ENCODE measurements at regions of chr3 and their contacts with region 1.

Region 1: DNA sequence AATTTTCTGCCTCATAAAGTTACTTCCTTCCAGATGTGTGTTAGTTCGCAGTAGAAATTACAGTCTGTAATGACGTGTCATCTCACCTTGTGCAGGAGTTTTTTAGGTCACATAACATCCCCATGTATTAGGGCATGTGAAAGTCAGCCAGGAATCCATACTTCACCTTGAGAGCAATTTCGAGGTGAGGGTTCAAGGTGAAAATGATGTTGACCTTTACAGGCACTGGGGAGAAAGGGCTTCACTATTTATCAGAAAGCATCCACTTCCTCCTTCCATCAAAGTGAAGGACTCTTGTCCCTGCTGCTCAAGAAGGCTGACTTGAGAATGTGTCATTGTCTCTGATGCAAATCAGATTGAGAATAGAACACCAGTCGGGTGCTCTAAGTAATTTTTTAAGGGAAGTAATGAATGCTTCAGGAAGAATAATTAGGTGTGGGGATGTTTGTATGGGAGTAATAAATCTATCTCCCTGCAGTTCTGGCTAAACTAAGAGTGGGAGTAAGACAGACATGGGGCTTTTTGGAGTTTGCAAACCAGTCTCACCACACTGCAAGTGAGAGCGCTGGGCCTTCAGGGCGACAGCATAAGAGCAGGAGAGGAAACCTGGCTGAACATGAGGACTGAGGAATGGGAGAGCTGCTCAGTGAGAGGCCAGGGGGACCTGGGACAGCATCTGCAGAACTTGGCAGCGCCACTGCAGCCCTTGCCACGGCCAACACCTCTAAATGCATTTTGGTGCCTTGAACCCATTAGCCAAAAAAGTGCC is 85.9 kb upstream of the IL12A start:
- DNase-seq: no peak
- ATAC-seq: peak; percentile 78
- H3K4me3 ChIP-seq: no peak overlapping the region
- H3K27ac ChIP-seq: peak overlapping the region; percentile 52
- H3K4me1 ChIP-seq: peaks cover 28% of the 10 kb centered on the region
- H3K27me3 ChIP-seq: no peaks in the 10 kb centered on the region
- CTCF ChIP-seq: no peak
- EP300 ChIP-seq: no peak
- POLR2A ChIP-seq: no peak
- RAD21 ChIP-seq: no peak

Region 2: GRCh38 chr3:159919873-159920272 is 17.1 kb after region 1 on chr3:
- CTCF ChIA-PET with region 1: interaction called, 5 read pairs
- POLR2A ChIA-PET with region 1: interaction called, 17 read pairs
- RAD21 ChIA-PET with region 1: interaction called, 4 read pairs
- SMC1A ChIA-PET with region 1: interaction called, 38 read pairs
- in situ Hi-C with region 1: no loop called
- intact Hi-C with region 1: no loop called
- DNase-seq: no peak
- ATAC-seq: peak; percentile 81
- H3K4me3 ChIP-seq: no peak overlapping the region
- H3K27ac ChIP-seq: peak overlapping the region; percentile 22; the same call in 1 of the 2 replicates
- H3K4me1 ChIP-seq: peaks cover 46% of the 10 kb centered on the region
- H3K27me3 ChIP-seq: no peaks in the 10 kb centered on the region
- CTCF ChIP-seq: no peak
- EP300 ChIP-seq: peak; percentile 75 to 80; a peak in 3 of 4 replicates
- POLR2A ChIP-seq: no peak
- RAD21 ChIP-seq: 0 out of 2 replicates have a peak, but pooled peaks have one; percentile 2

Region 3: DNA sequence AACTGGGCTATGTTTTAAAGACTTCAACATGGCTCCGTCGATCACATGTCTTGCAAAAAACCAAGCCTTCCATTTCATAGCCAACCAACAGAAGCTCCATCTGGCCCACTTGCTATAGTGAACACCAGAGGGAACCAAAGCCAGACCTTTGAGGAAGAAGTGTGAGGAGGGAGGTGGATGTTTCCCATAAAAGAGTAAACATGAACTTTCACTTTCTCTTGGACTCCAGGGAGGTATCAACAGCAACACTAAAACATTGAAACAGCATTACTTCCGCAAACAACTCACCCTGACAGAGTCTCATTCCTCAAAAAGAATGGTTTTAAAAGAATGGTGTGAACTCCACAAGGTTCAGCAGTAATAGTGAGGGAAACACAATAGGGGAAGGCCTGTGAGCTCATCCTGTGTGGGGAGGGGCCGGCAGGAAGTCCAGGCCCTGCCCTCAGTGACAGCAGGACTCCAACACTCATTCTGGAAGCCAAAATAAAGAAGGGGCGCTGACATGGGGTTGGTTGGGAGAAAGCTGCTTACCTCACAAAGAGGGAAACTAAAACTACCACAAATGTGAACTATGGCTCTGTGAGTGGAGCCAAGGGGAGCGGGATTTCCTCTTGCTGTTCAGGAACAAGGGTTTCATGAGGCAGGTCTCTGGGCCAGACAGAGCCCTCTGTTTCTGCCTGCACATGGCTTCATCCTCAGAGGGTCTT is 26.9 kb after region 1 on chr3:
- CTCF ChIA-PET with region 1: interaction called, 3 read pairs
- POLR2A ChIA-PET with region 1: interaction called, 17 read pairs
- RAD21 ChIA-PET with region 1: interaction called, 4 read pairs
- SMC1A ChIA-PET with region 1: interaction called, 38 read pairs
- in situ Hi-C with region 1: no loop called
- intact Hi-C with region 1: no loop called
- DNase-seq: no peak
- ATAC-seq: peak; percentile 88
- H3K4me3 ChIP-seq: no peak overlapping the region
- H3K27ac ChIP-seq: peak overlapping the region; percentile 65
- H3K4me1 ChIP-seq: peaks cover 14% of the 10 kb centered on the region
- H3K27me3 ChIP-seq: no peaks in the 10 kb centered on the region
- CTCF ChIP-seq: peak; percentile 37 to 40 (median 39); a peak in 4 of 6 replicates
- EP300 ChIP-seq: no peak
- POLR2A ChIP-seq: no peak
- RAD21 ChIP-seq: peak; percentile 63

Region 4: DNA sequence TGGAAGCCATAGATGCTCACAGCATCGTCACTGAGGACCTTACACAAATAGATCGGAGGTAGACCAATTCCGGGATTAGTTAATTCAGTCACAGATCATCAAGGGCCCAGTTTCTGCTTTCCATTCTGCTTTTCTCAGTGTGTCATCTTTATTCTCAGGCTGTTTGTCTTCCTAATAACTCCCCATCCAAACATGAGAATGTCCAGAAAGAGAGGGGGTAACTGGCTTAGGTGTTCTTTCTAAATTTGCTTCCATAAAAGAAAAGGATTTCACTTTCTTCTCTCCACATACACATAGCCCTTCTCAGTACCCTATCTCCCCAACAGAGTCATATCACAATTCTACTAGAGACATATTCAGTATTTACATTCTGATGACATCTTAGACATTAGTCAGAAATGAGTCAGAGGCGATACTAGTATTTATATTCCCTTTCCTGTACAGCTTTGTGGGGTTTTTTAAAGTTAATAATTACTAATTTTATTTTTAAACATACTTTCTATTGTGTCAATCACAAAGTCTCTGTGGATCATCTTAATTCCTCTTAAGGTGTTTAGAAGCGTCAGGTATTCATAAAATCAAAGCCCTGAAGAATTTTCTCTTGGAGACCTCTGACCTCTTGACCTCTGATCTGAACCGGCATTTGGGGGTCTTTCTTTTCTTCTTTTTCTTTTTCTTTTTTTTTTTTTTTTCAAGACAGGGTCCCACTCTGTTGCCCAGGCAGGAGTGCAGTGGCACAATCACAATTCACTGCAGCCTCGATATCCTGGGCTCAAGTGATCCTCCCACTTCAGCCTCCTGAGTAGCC is 61.6 kb after region 1 on chr3:
- CTCF ChIA-PET with region 1: no interaction called
- POLR2A ChIA-PET with region 1: no interaction called
- RAD21 ChIA-PET with region 1: interaction called, 3 read pairs
- SMC1A ChIA-PET with region 1: interaction called, 6 read pairs
- in situ Hi-C with region 1: no loop called
- intact Hi-C with region 1: loop called (anchors 1 kb)
- DNase-seq: peak; percentile 74
- ATAC-seq: peak; percentile 97
- H3K4me3 ChIP-seq: peak overlapping the region; percentile 60; the same call in 1 of the 2 replicates
- H3K27ac ChIP-seq: peak overlapping the region; percentile 71
- H3K4me1 ChIP-seq: peaks cover 11% of the 10 kb centered on the region; the same call in 1 of the 2 replicates
- H3K27me3 ChIP-seq: no peaks in the 10 kb centered on the region
- CTCF ChIP-seq: no peak
- EP300 ChIP-seq: peak in 1 of 2 experiments; percentile 92; a peak in 2 of 4 replicates
- POLR2A ChIP-seq: no peak
- RAD21 ChIP-seq: no peak